Esophagus muscularis mucosa (tissue), 4 donors: ENCODE measurements at regions of chr5 and their contacts with region 1.

Region 1: DNA sequence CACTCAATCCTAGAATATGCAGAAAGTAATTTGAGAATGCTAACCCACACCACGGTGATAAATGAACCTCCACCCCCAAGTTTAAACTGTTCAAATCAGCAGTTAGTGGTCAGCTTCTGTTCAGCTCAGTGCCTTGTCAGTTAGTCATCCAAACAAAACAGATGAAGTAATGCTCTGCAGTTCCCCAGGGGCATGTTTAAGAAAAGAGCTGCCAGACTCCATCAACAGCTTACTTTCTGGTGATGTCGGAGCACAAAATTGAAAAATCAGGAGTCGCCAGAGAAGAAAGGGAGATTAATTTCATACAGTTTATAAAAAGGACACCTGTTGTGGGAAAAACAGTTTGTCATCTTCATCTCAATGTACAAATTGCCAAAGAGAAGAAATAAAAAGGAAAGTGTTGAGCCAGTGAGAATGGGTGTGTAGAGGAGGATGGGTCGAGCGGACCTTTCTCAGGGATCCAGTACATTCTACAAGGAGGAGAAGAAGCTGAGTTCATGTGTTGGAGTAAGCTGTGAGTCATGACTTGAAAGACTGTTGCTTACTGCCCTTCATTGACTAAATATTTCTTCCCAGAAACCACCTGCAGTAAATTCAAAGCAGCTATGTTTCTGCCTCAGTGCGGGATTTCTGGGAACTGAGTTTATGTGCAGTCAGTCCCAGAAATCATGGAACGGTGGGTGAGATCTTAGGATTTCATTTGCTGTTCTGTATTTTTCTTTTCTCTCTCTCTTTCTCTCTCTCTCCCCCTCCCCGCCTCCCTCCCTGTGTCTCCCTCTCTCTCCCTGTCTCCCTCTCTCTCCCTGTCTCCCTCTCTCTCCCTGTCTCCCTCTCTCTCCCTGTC is 13.7 kb downstream of the TRIO start:
- DNase-seq: no peak
- H3K4me3 ChIP-seq: peak overlapping the region; percentile 24 to 51 (median 35)
- H3K27ac ChIP-seq: peak overlapping the region; percentile 79 to 87 (median 82)
- H3K4me1 ChIP-seq: peaks cover 72 to 100% (median 92%) of the 10 kb centered on the region in 4 donors
- H3K27me3 ChIP-seq: no peaks in the 10 kb centered on the region
- CTCF ChIP-seq: no peak
- EP300 ChIP-seq: peak; percentile 77
- POLR2A ChIP-seq: no peak

Region 2: GRCh38 chr5:14199902-14200301 is 43.0 kb after region 1 on chr5:
- intact Hi-C with region 1: loop called (anchors 5 kb)
- DNase-seq: no peak
- H3K4me3 ChIP-seq: no peak overlapping the region
- H3K27ac ChIP-seq: peak overlapping the region; percentile 50 to 64 (median 58)
- H3K4me1 ChIP-seq: peaks cover 70 to 97% (median 89%) of the 10 kb centered on the region in 4 donors
- H3K27me3 ChIP-seq: no peaks in the 10 kb centered on the region
- CTCF ChIP-seq: no peak
- EP300 ChIP-seq: no peak
- POLR2A ChIP-seq: no peak